Dorsolateral prefrontal cortex (tissue), 120 donors: ENCODE measurements at regions of chr12 and their contacts with region 1.

Region 1: GRCh38 chr12:98894412-98895085 is 249.5 kb downstream of the APAF1 start:
- DNase-seq: peak in 9 of 10 donors; percentile 23 to 78 (median 56)
- H3K4me3 ChIP-seq: peak overlapping the region; percentile 53 to 87 (median 74)
- H3K27ac ChIP-seq: peak overlapping the region; percentile 61 to 99 (median 92)
- H3K27me3 ChIP-seq: peaks cover 0 to 6% (median 0%) of the 10 kb centered on the region in 45 donors
- CTCF ChIP-seq: peak in 2 of 56 donors; percentile 0 to 11

Region 2: GRCh38 chr12:98644711-98645402 is 249.7 kb before region 1 on chr12 and contains the starts of genes APAF1 and IKBIP:
- intact Hi-C with region 1: loop called in 1 of 2 experiments (anchors 2 kb)
- DNase-seq: peak; percentile 93 to 97 (median 96)
- H3K4me3 ChIP-seq: peak within 1 kb of the TSS; percentile 63 to 100 (median 95)
- H3K27ac ChIP-seq: peak within 1 kb of the TSS in 58 of 59 donors; percentile 33 to 92 (median 78)
- H3K27me3 ChIP-seq: no peaks in the 10 kb centered on the region
- CTCF ChIP-seq: peak in 20 of 56 donors; percentile 3 to 62 (median 26)
- total RNA-seq, gene APAF1: 9.1 to 25.1 (median 14.5) TPM
- total RNA-seq, gene IKBIP: 1.4 to 7.5 (median 3.1) TPM

Region 3: GRCh38 chr12:98725476-98726247 is 168.9 kb before region 1 on chr12:
- intact Hi-C with region 1: loop called (anchors 5 kb)
- DNase-seq: peak; percentile 55 to 90 (median 74)
- H3K4me3 ChIP-seq: peak overlapping the region in 23 of 59 donors; percentile 1 to 45 (median 22)
- H3K27ac ChIP-seq: peak overlapping the region; percentile 39 to 94 (median 84)
- H3K27me3 ChIP-seq: no peaks in the 10 kb centered on the region
- CTCF ChIP-seq: peak in 55 of 56 donors; percentile 25 to 78 (median 58)

Region 4: GRCh38 chr12:98743347-98743953 is 151.1 kb before region 1 on chr12:
- intact Hi-C with region 1: loop called in 1 of 2 experiments (anchors 5 kb)
- DNase-seq: peak in 2 of 10 donors; percentile 43 to 54
- H3K4me3 ChIP-seq: peak overlapping the region in 6 of 59 donors; percentile 2 to 62 (median 23)
- H3K27ac ChIP-seq: peak overlapping the region in 50 of 59 donors; percentile 2 to 93 (median 68)
- H3K27me3 ChIP-seq: no peaks in the 10 kb centered on the region
- CTCF ChIP-seq: peak in 53 of 56 donors; percentile 15 to 79 (median 58)

Region 5: GRCh38 chr12:98750511-98750910 is 144.0 kb before region 1 on chr12:
- intact Hi-C with region 1: loop called (anchors 2 to 5 kb)
- DNase-seq: peak; percentile 33 to 86 (median 74)
- H3K4me3 ChIP-seq: no peak overlapping the region
- H3K27ac ChIP-seq: peak overlapping the region; percentile 5 to 93 (median 86)
- H3K27me3 ChIP-seq: no peaks in the 10 kb centered on the region
- CTCF ChIP-seq: no peak

Region 6: GRCh38 chr12:98852181-98852580 is 42.4 kb before region 1 on chr12:
- intact Hi-C with region 1: loop called in 1 of 2 experiments (anchors 5 kb)
- DNase-seq: no peak
- H3K4me3 ChIP-seq: no peak overlapping the region
- H3K27ac ChIP-seq: peak overlapping the region in 53 of 59 donors; percentile 2 to 80 (median 62)
- H3K27me3 ChIP-seq: no peaks in the 10 kb centered on the region
- CTCF ChIP-seq: no peak

Region 7: DNA sequence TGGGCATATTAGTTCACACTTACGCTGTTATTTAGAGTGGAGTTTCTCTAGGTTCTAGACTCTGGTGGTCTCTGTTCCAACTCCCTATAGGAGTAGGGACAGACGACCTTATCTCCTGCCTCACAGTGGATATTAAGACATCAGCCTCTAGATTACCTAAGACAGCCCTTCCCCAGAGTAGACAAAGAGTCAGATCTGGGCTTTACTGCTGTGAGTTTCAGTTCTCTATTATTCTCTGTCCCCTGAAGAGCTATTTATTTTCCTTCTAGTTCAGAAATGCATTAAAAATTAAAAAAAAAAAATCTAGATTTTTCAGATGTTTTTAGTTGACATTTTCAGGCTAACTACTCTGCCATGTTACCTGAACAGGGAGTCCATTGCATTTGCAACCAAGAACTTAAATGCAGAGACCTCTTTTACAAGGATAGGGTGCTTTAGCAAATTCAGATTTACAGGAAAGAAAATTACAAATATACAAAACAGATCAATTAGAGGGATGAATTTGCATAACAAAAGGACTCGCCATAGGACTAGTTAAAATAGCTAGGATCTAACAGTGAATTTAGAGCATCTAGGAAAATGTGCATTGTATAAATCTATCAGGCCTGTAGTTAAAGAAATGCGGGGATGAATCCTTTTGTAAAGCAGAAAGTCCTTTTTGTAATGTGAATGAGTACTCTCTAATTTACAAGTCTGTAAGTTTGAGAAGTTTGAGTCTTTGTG is 131.9 kb after region 1 on chr12:
- intact Hi-C with region 1: no loop called
- DNase-seq: no peak
- H3K4me3 ChIP-seq: no peak overlapping the region
- H3K27ac ChIP-seq: no peak overlapping the region
- H3K27me3 ChIP-seq: peaks cover 0 to 4% (median 0%) of the 10 kb centered on the region in 45 donors
- CTCF ChIP-seq: no peak